ENCODE measurements at regions of chr18 and their contacts with region 1.

Region 1: DNA sequence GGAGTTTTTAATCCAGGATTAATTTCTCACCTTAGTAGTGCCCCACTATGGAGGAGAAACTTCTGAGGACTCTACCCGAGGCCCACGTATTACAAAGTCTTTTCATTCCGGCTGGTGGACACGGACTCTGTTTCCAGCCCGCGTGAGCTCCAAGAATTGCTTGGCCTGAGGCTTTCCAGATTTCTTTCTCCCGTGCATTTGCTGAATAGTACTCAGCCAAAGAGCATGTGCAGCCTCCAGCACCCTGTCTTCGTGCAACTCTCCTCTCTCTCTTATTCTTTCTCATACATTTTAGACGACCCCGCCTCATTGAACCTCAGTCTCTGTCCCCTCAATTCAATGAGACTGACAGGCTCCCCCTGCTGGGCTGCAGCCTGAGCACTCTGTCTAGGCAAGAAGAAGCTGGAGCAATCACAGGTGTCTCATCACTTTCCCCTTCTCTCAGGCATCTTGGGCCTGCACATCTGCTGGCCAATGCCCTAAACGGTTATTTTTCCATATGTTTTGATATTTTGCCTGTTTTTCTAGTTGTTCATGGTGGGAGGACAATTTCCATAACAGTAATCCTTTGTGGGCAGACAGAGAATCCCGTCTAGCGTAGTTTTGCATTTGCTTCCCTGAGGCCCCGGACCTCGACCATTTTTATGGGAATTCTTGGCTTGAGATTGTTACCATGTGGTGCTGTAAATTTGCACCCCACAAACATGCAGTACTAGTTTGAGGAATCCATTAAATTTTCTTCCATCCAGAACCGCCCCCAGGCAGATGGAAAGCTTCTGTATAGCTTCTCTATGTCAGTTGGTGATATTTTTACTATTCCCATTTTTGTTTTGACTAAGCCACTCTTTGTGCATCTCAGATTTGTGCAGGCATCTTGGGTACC is 50.1 kb upstream of the LPIN2 start:
- DNase-seq: peak; percentile 65
- ATAC-seq: peak; percentile 73
- H3K4me3 ChIP-seq: no peak overlapping the region
- H3K4me3 Mint-ChIP-seq: no peak overlapping the region
- H3K27ac ChIP-seq: no peak overlapping the region
- H3K27ac Mint-ChIP-seq: peak overlapping the region; percentile 10
- H3K4me1 ChIP-seq: peaks cover 27 to 31% of the 10 kb centered on the region in 2 donors
- H3K4me1 Mint-ChIP-seq: peaks cover 40% of the 10 kb centered on the region
- H3K27me3 ChIP-seq: no peaks in the 10 kb centered on the region
- H3K27me3 Mint-ChIP-seq: no peaks in the 10 kb centered on the region
- CTCF ChIP-seq: peak; percentile 68

Region 2: GRCh38 chr18:2889761-2890192 is 173.3 kb before region 1 on chr18:
- CTCF ChIA-PET with region 1: no interaction called
- POLR2A ChIA-PET with region 1: no interaction called
- intact Hi-C with region 1: no loop called
- DNase-seq: no peak
- ATAC-seq: no peak
- H3K4me3 ChIP-seq: no peak overlapping the region
- H3K4me3 Mint-ChIP-seq: no peak overlapping the region
- H3K27ac ChIP-seq: no peak overlapping the region
- H3K27ac Mint-ChIP-seq: no peak overlapping the region
- H3K4me1 ChIP-seq: no peaks in the 10 kb centered on the region
- H3K4me1 Mint-ChIP-seq: no peaks in the 10 kb centered on the region
- H3K27me3 ChIP-seq: peaks cover 0 to 4% (median 0%) of the 10 kb centered on the region in 4 experiments
- H3K27me3 Mint-ChIP-seq: peaks cover 13% of the 10 kb centered on the region
- CTCF ChIP-seq: no peak

Region 3: GRCh38 chr18:2985628-2986027 is 77.4 kb before region 1 on chr18:
- CTCF ChIA-PET with region 1: interaction called, 59 read pairs
- POLR2A ChIA-PET with region 1: no interaction called
- intact Hi-C with region 1: no loop called
- DNase-seq: peak; percentile 72
- ATAC-seq: peak; percentile 69
- H3K4me3 ChIP-seq: no peak overlapping the region
- H3K4me3 Mint-ChIP-seq: no peak overlapping the region
- H3K27ac ChIP-seq: no peak overlapping the region
- H3K27ac Mint-ChIP-seq: no peak overlapping the region
- H3K4me1 ChIP-seq: peaks cover 32 to 51% of the 10 kb centered on the region in 2 donors
- H3K4me1 Mint-ChIP-seq: peaks cover 51% of the 10 kb centered on the region
- H3K27me3 ChIP-seq: no peaks in the 10 kb centered on the region
- H3K27me3 Mint-ChIP-seq: no peaks in the 10 kb centered on the region
- CTCF ChIP-seq: peak; percentile 81

Region 4: GRCh38 chr18:3007491-3007890 is 55.5 kb before region 1 on chr18:
- CTCF ChIA-PET with region 1: interaction called, 14 read pairs
- POLR2A ChIA-PET with region 1: no interaction called
- intact Hi-C with region 1: no loop called
- DNase-seq: no peak
- ATAC-seq: no peak
- H3K4me3 ChIP-seq: no peak overlapping the region
- H3K4me3 Mint-ChIP-seq: no peak overlapping the region
- H3K27ac ChIP-seq: no peak overlapping the region
- H3K27ac Mint-ChIP-seq: no peak overlapping the region
- H3K4me1 ChIP-seq: peaks cover 8 to 9% of the 10 kb centered on the region in 2 donors
- H3K4me1 Mint-ChIP-seq: peaks cover 21% of the 10 kb centered on the region
- H3K27me3 ChIP-seq: no peaks in the 10 kb centered on the region
- H3K27me3 Mint-ChIP-seq: no peaks in the 10 kb centered on the region
- CTCF ChIP-seq: no peak

Region 5: DNA sequence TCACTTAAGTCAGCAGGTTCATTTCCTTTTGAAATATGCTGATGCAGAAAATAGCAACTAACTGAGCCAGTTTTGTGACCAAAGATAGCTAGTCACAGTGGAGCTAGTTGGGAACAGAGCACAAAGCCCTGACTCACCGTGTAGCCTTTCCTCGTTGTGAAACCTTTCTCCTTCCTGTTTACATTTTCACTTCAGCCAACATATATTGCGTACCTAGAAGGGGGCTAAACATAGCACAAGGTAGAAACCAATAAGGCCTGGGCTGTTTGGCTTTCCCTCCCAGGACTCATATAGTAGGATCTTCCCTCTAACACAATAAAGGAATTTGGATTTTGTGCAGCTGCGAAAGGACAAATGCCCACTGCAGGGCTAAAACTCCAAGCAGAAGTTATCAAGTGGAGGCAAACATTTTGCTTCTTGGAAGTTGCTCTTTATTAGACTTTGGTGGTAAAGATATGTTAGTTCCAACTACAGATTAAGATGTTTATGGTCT is 25.6 kb before region 1 on chr18:
- CTCF ChIA-PET with region 1: interaction called, 11 read pairs
- POLR2A ChIA-PET with region 1: interaction called, 4 read pairs
- intact Hi-C with region 1: no loop called
- DNase-seq: peak; percentile 28
- ATAC-seq: peak; percentile 63
- H3K4me3 ChIP-seq: no peak overlapping the region
- H3K4me3 Mint-ChIP-seq: peak overlapping the region; percentile 15
- H3K27ac ChIP-seq: peak overlapping the region in 1 of 2 donors; percentile 34
- H3K27ac Mint-ChIP-seq: peak overlapping the region; percentile 78
- H3K4me1 ChIP-seq: peaks cover 5 to 6% of the 10 kb centered on the region in 2 donors
- H3K4me1 Mint-ChIP-seq: peaks cover 6% of the 10 kb centered on the region
- H3K27me3 ChIP-seq: no peaks in the 10 kb centered on the region
- H3K27me3 Mint-ChIP-seq: no peaks in the 10 kb centered on the region
- CTCF ChIP-seq: no peak

Region 6: DNA sequence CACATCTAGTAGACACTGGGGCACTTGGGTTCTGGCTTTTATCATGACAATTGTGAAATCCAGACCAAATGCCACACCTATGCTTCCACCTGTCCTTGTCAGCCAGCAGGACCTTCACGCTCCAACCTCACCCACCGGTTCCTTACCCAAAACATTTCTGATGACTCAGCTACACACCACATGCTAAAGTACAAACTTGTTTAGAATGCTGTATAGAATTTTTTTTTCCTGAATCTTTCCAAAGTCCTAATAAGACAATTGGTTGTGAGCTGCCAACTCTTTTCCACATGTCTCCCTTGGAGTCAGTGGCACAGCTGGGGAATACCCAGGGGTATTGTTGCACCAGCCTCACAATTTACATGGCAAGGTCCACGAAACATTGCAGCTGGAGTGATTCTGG is 25.4 kb after region 1 on chr18:
- CTCF ChIA-PET with region 1: interaction called, 10 read pairs
- POLR2A ChIA-PET with region 1: no interaction called
- intact Hi-C with region 1: no loop called
- DNase-seq: no peak
- ATAC-seq: no peak
- H3K4me3 ChIP-seq: no peak overlapping the region
- H3K4me3 Mint-ChIP-seq: no peak overlapping the region
- H3K27ac ChIP-seq: no peak overlapping the region
- H3K27ac Mint-ChIP-seq: no peak overlapping the region
- H3K4me1 ChIP-seq: no peaks in the 10 kb centered on the region
- H3K4me1 Mint-ChIP-seq: no peaks in the 10 kb centered on the region
- H3K27me3 ChIP-seq: no peaks in the 10 kb centered on the region
- H3K27me3 Mint-ChIP-seq: no peaks in the 10 kb centered on the region
- CTCF ChIP-seq: no peak

Region 7: DNA sequence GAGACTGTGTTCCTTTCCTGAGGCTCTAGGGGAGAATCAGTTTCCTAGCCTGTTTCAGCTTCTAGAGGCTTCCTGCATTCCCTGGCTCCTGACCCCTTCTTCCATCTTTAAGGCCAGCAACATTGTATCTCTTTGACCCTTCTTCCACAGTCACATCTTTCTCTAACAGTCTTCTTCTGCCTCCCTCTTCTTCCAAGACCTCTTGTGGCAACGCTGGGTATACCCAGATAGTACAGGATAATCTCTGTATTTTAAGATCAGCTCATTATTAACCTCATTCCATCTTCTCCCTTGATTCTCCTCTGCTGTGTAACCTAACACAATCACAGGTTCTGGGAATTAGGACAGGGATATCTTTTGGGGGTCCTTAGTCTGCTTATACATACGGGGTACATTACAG is 175.7 kb after region 1 on chr18:
- CTCF ChIA-PET with region 1: interaction called, 4 read pairs
- POLR2A ChIA-PET with region 1: interaction called, 13 read pairs
- intact Hi-C with region 1: no loop called
- DNase-seq: no peak
- ATAC-seq: no peak
- H3K4me3 ChIP-seq: no peak overlapping the region
- H3K4me3 Mint-ChIP-seq: no peak overlapping the region
- H3K27ac ChIP-seq: no peak overlapping the region
- H3K27ac Mint-ChIP-seq: peak overlapping the region; percentile 0
- H3K4me1 ChIP-seq: no peaks in the 10 kb centered on the region
- H3K4me1 Mint-ChIP-seq: peaks cover under 1% of the 10 kb centered on the region
- H3K27me3 ChIP-seq: no peaks in the 10 kb centered on the region
- H3K27me3 Mint-ChIP-seq: no peaks in the 10 kb centered on the region
- CTCF ChIP-seq: no peak